Prostate gland (tissue), 2 donors: ENCODE measurements at regions of chr11 and their contacts with region 1.

Region 1: GRCh38 chr11:4713241-4713640 is 8.7 kb downstream of the MMP26 start:
- DNase-seq: peak; percentile 50
- H3K4me3 ChIP-seq: no peak overlapping the region
- H3K27ac ChIP-seq: peak overlapping the region; percentile 47 to 58
- H3K4me1 ChIP-seq: no peaks in the 10 kb centered on the region
- H3K27me3 ChIP-seq: no peaks in the 10 kb centered on the region
- CTCF ChIP-seq: no peak
- POLR2A ChIP-seq: no peak

Region 2: DNA sequence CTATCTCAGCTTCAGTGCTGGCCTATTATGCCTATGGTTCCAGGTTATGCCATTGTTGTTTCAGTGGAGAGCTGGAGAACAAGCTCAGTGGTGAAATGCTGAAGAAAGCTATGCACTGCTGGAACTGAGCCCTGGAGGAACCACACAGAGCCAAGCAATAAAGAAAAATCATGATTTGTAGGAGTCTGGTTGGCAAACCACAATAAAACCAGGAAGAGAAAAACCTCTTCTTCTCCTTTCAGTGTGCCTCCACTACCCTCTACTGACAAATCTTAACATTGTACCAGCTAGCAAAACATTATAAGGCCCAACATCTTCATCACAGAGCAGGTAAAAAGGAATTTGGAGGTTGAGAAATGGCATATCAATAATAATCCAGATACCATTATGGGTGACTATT is 113.2 kb after region 1 on chr11:
- intact Hi-C with region 1: loop called (anchors 10 kb)
- DNase-seq: peak; percentile 70
- H3K4me3 ChIP-seq: no peak overlapping the region
- H3K27ac ChIP-seq: peak overlapping the region; percentile 38 to 56
- H3K4me1 ChIP-seq: no peaks in the 10 kb centered on the region
- H3K27me3 ChIP-seq: no peaks in the 10 kb centered on the region
- CTCF ChIP-seq: peak in 3 of 4 experiments; percentile 61 to 91 (median 74)
- POLR2A ChIP-seq: no peak